Ascending aorta (tissue), 2 donors: ENCODE measurements at regions of chr6 and their contacts with region 1.

Region 1: GRCh38 chr6:43769526-43770416 is at the start of gene VEGFA:
- DNase-seq: peak; percentile 62 to 93
- H3K4me3 ChIP-seq: peak within 1 kb of the TSS; percentile 86 to 97
- H3K27ac ChIP-seq: peak within 1 kb of the TSS; percentile 86 to 98
- H3K4me1 ChIP-seq: peaks cover 10 to 23% of the 10 kb centered on the region in 2 donors
- H3K27me3 ChIP-seq: no peaks in the 10 kb centered on the region
- CTCF ChIP-seq: peak; percentile 97 to 99 (median 97)
- total RNA-seq, gene VEGFA: 110 TPM

Region 2: DNA sequence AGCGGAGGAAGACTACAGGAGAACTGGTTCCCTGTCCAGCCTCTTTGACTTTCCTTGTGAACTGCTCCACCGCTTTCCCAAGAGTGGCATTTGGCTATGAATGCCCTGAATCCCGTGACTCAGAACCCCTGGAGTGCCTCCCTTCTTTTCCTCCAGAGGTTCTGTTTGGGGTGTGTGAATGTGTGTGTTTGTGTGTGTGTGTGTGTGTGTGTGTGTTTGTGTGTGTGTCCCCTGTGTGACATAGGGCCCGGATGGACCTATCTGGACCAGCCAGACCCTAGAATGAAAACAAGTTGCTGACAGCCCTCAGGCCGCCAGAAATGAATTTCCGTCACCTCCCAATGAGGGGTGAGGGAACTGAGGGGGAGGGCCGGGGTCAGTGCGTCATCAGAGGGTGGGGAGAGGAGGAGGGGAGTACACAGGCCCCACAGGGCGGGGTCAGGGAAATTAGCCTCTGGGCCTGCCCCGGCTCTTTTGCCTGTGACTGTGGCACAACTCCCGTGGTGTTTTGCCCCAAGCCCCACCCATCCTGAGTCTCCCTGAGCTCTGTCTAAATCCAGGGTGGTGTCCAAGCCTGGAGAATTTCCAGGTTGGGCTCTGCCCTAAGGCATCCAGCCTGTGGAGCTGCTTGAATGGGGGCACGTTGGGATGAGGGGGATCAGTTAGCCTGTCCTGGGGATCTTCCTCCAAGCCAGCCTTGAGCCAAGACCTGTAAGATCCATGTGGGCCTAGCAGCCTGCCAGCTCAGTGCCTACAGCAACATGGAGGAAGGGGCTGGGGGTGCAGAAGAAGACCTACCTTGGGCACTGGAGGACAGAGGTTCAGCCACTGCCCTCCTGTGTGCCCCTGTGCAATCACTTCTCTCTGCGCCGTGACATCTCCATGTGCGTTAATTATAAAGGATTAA is 67.0 kb before region 1 on chr6:
- intact Hi-C with region 1: loop called (anchors 5 kb)
- DNase-seq: peak; percentile 80 to 96
- H3K4me3 ChIP-seq: no peak overlapping the region
- H3K27ac ChIP-seq: peak overlapping the region; percentile 78 to 85
- H3K4me1 ChIP-seq: peaks cover 5 to 19% of the 10 kb centered on the region in 2 donors
- H3K27me3 ChIP-seq: no peaks in the 10 kb centered on the region
- CTCF ChIP-seq: no peak

Region 3: GRCh38 chr6:44058617-44059358 is 289.0 kb after region 1 on chr6:
- intact Hi-C with region 1: loop called (anchors 5 kb)
- DNase-seq: peak; percentile 90 to 96
- H3K4me3 ChIP-seq: peak overlapping the region in 1 of 2 donors; percentile 14
- H3K27ac ChIP-seq: peak overlapping the region; percentile 86 to 91
- H3K4me1 ChIP-seq: peaks cover 29 to 42% of the 10 kb centered on the region in 2 donors
- H3K27me3 ChIP-seq: no peaks in the 10 kb centered on the region
- CTCF ChIP-seq: no peak

Region 4: DNA sequence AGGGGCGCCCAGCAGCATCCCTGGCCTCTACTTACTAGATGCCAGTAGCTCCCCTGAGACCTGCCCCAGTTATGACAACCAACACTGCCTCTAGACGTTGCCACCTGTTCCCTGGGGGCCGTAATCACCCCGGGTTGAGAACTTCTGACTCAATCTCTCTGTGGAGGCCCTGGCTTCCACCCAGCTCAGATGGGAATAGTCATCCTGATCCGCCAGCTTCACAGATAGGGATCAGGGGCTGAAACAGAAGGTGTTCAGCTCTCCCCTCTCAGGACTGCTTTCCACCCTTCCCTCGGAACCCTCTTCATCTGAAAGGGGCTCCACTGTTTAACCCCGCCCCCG is 392.2 kb after region 1 on chr6:
- intact Hi-C with region 1: no loop called
- DNase-seq: no peak
- H3K4me3 ChIP-seq: no peak overlapping the region
- H3K27ac ChIP-seq: no peak overlapping the region
- H3K4me1 ChIP-seq: no peaks in the 10 kb centered on the region
- H3K27me3 ChIP-seq: no peaks in the 10 kb centered on the region
- CTCF ChIP-seq: no peak

Region 5: DNA sequence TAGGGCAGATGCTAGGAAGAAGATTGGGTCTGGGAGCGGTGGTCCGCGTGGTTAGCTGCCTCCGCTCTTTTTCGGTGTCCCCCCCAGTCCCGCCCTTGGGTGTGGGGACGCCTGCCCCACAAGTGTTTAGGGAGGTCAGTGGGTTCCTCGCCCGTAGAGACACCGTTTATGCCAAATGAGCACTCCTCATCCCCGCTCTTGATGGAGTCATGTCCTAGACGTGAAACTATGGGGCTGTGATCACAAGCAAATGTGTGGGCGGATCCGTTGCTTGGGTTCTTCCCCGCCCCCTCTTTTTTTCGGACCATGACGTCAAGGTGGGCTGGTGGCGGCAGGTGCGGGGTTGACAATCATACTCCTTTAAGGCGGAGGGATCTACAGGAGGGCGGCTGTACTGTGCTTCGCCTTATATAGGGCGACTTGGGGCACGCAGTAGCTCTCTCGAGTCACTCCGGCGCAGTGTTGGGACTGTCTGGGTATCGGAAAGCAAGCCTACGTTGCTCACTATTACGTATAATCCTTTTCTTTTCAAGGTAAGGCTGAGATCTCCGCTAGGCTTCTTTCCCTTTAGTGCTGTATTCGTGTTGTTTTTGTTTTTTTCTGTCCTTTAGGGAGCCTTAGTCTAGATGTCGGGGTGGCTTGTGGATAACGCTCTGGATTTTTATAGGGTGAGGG is 477.0 kb after region 1 on chr6 and contains the start of gene HSP90AB1:
- intact Hi-C with region 1: loop called (anchors 5 kb)
- DNase-seq: peak; percentile 96 to 99
- H3K4me3 ChIP-seq: peak within 1 kb of the TSS; percentile 92 to 99
- H3K27ac ChIP-seq: peak within 1 kb of the TSS; percentile 99 to 100
- H3K4me1 ChIP-seq: peaks cover 0 to 30% of the 10 kb centered on the region in 2 donors
- H3K27me3 ChIP-seq: no peaks in the 10 kb centered on the region
- CTCF ChIP-seq: peak in 1 of 3 experiments; percentile 9
- total RNA-seq, gene HSP90AB1: 354 TPM